GM12878 (cell line): ENCODE measurements at regions of chr6 and their contacts with region 1.

Region 1: GRCh38 chr6:68158256-68158655 is 476.8 kb upstream of the ADGRB3 start:
- DNase-seq: no peak
- ATAC-seq: peak; percentile 85
- H3K4me3 ChIP-seq: no peak overlapping the region
- H3K27ac ChIP-seq: no peak overlapping the region
- H3K4me1 ChIP-seq: no peaks in the 10 kb centered on the region; the same call in 1 of the 2 replicates
- H3K27me3 ChIP-seq: no peaks in the 10 kb centered on the region
- CTCF ChIP-seq: no peak
- EP300 ChIP-seq: peak; percentile 46 to 64; a peak in 2 of 4 replicates
- POLR2A ChIP-seq: no peak
- RAD21 ChIP-seq: no peak

Region 2: GRCh38 chr6:68008445-68008844 is 149.8 kb before region 1 on chr6:
- CTCF ChIA-PET with region 1: no interaction called
- POLR2A ChIA-PET with region 1: no interaction called
- RAD21 ChIA-PET with region 1: no interaction called
- SMC1A ChIA-PET with region 1: no interaction called
- in situ Hi-C with region 1: no loop called
- intact Hi-C with region 1: loop called (anchors 5 kb)
- DNase-seq: peak; percentile 9
- ATAC-seq: peak; percentile 93
- H3K4me3 ChIP-seq: no peak overlapping the region
- H3K27ac ChIP-seq: no peak overlapping the region
- H3K4me1 ChIP-seq: no peaks in the 10 kb centered on the region
- H3K27me3 ChIP-seq: no peaks in the 10 kb centered on the region
- CTCF ChIP-seq: no peak
- EP300 ChIP-seq: no peak
- POLR2A ChIP-seq: no peak
- RAD21 ChIP-seq: peak; percentile 9; the same call in 1 of the 2 replicates

Region 3: GRCh38 chr6:68087399-68088133 is 70.7 kb before region 1 on chr6:
- CTCF ChIA-PET with region 1: interaction called, 3 read pairs
- POLR2A ChIA-PET with region 1: no interaction called
- RAD21 ChIA-PET with region 1: no interaction called
- SMC1A ChIA-PET with region 1: no interaction called
- in situ Hi-C with region 1: no loop called
- intact Hi-C with region 1: loop called (anchors 5 kb)
- DNase-seq: peak; percentile 32
- ATAC-seq: peak; percentile 93
- H3K4me3 ChIP-seq: no peak overlapping the region
- H3K27ac ChIP-seq: peak overlapping the region; percentile 47
- H3K4me1 ChIP-seq: peaks cover 3% of the 10 kb centered on the region; the same call in 1 of the 2 replicates
- H3K27me3 ChIP-seq: no peaks in the 10 kb centered on the region
- CTCF ChIP-seq: no peak
- EP300 ChIP-seq: peak in 1 of 2 experiments; percentile 23; a peak in 1 of 4 replicates
- POLR2A ChIP-seq: no peak
- RAD21 ChIP-seq: no peak

Region 4: DNA sequence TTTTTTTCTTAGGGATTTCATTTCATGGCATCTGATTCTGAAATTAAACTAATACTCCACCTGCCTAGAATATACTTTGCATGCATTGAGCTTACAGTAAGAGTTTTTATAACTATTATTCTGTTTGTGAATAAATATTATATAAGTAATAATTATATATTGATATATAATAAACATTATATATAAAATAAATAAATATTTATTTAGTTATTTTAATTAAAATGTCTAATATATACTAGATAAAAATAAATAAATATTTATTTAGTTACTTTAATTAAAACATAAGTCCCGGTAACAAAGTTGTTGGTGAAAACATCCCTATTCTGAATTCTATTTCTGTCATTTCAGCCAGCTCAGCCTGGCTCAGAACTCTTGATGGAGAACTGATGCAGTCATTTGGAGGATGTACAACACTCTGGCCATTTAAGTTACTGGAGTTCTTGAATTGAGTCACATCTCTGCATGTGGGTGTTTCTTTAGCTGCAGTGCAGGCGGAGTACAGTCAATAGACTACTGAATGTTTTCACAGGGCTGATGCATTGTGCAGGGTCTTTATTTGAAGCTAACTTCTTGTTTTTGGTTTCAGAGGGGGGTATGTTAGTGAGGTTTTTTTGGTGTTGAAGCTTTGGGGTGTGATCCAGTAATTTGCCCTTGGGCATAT is 32.0 kb before region 1 on chr6:
- CTCF ChIA-PET with region 1: no interaction called
- POLR2A ChIA-PET with region 1: no interaction called
- RAD21 ChIA-PET with region 1: no interaction called
- SMC1A ChIA-PET with region 1: interaction called, 9 read pairs
- in situ Hi-C with region 1: no loop called
- intact Hi-C with region 1: loop called (anchors 2 kb)
- DNase-seq: peak; percentile 26
- ATAC-seq: peak; percentile 98
- H3K4me3 ChIP-seq: no peak overlapping the region
- H3K27ac ChIP-seq: no peak overlapping the region
- H3K4me1 ChIP-seq: no peaks in the 10 kb centered on the region
- H3K27me3 ChIP-seq: no peaks in the 10 kb centered on the region
- CTCF ChIP-seq: no peak
- EP300 ChIP-seq: no peak; a peak in 1 of 4 replicates
- POLR2A ChIP-seq: no peak
- RAD21 ChIP-seq: no peak

Region 5: GRCh38 chr6:68144667-68145066 is 13.6 kb before region 1 on chr6:
- CTCF ChIA-PET with region 1: no interaction called
- POLR2A ChIA-PET with region 1: no interaction called
- RAD21 ChIA-PET with region 1: no interaction called
- SMC1A ChIA-PET with region 1: no interaction called
- in situ Hi-C with region 1: no loop called
- intact Hi-C with region 1: no loop called
- DNase-seq: no peak
- ATAC-seq: no peak
- H3K4me3 ChIP-seq: no peak overlapping the region
- H3K27ac ChIP-seq: no peak overlapping the region
- H3K4me1 ChIP-seq: no peaks in the 10 kb centered on the region
- H3K27me3 ChIP-seq: no peaks in the 10 kb centered on the region; a peak in 1 of 4 replicates
- CTCF ChIP-seq: no peak
- EP300 ChIP-seq: no peak
- POLR2A ChIP-seq: no peak
- RAD21 ChIP-seq: no peak

Region 6: DNA sequence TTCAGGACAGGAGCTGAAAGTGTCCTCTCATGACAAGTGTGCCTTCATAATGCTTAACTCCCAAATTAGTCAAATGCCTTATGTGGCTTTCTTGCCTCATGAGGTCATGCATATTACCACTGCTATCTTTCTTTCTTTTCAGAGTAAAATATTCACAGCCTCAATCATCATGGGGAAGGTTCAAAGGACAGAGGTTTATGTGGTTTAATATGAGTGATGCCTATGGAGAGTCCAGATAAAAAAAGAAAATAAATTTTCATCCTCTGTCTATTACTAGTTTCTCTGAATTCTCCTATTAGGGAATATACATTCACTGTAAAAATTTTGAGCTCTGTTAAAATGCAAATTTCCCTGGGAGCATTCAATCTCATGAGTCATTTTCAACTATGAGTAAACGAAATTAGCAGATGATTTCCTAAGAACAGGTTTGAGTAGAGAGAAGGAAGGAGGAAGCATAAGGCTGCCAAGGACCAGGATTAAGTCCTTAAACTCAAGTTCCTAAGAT is 79.9 kb after region 1 on chr6:
- CTCF ChIA-PET with region 1: no interaction called
- POLR2A ChIA-PET with region 1: no interaction called
- RAD21 ChIA-PET with region 1: no interaction called
- SMC1A ChIA-PET with region 1: no interaction called
- in situ Hi-C with region 1: no loop called
- intact Hi-C with region 1: loop called (anchors 5 kb)
- DNase-seq: no peak
- ATAC-seq: peak; percentile 80
- H3K4me3 ChIP-seq: no peak overlapping the region
- H3K27ac ChIP-seq: no peak overlapping the region
- H3K4me1 ChIP-seq: no peaks in the 10 kb centered on the region
- H3K27me3 ChIP-seq: no peaks in the 10 kb centered on the region
- CTCF ChIP-seq: no peak
- EP300 ChIP-seq: peak in 1 of 2 experiments; percentile 19; a peak in 1 of 4 replicates
- POLR2A ChIP-seq: no peak
- RAD21 ChIP-seq: no peak